ENCODE measurements at regions of chr7 and their contacts with region 1.

Region 1: DNA sequence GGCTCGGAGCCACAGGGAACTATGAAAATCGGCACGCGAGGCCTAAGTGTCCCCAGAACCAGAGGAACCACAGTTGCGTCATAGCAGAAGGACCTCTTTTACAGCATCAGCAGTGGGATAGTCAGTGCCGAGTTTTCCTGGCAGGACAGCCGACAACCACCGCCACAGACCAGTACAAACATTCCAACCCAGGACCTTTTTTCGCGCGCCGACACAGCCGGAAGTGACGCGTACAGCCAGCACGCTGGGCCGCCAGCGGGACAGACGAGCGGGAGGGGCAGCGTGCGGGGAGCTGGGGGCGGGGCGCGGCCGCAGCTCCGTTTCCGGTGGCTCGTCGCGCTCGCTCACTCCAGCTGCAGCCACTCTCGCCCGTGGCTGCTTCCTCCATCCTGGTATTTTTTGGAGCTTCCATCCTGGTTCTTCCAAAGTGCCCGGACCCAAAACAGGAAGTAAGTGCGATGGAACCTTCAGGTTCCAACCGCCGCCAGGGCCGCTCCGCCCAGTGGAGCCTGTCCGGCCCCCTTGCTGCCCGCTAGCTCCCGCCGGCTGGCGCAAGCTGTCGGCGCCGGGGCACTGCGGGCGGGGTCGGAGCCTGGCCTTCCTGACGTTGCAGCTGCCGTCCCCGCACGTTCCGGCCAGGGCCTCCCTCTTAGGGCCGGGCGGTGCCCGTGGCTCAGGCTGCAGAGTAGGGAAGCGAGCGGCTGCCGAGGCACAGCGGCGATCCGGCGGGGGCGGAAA is at the start of gene DMTF1:
- DNase-seq: peak; percentile 87 to 92
- ATAC-seq: peak; percentile 93 to 95
- H3K4me3 ChIP-seq: peak within 1 kb of the TSS; percentile 75 to 98 (median 86)
- H3K27ac ChIP-seq: peak within 1 kb of the TSS; percentile 92 to 98 (median 98)
- H3K4me1 ChIP-seq: peaks cover 48 to 50% of the 10 kb centered on the region in 2 donors
- H3K27me3 ChIP-seq: no peaks in the 10 kb centered on the region
- CTCF ChIP-seq: peak in 1 of 5 experiments; percentile 13
- POLR2A ChIP-seq: peak; percentile 84 to 88
- total RNA-seq, gene DMTF1: 10.6 to 31.9 (median 13.1) TPM

Region 2: DNA sequence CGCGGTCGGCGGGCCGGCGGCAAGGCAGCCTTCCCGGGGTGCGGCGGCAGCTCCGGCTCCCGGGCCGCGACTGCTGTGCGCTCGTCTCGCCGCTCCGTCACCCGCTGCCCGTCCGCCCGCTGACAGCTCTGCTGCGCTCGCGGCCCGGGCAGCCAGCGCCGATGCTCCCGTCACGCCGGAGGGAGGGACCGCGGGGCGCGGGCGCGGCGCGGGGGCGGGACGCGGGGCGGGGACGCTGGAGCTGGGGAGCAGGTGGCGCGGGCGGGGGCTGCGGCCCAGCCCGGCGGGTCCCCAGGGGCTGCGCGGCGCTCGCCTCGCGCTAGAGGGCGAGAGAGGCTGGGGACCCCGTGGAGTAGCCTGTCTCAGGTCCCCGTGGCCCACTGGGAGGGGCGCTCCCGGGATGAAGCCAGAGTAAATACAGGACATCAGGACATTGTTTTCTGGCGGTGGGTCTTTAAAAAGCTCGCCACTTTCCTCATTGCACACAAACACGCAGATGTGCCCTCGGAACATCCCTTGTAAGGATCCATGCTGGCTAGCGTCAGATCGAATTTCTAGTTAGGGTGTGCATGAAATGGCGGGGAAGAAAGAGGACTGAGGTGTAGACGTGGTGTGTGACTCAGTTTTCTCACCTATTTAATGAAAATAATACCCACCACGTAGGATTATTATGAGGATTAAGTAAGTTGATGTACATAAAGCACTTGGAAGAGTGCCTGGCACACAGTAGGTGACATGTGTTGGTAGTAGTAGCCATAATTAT is 92.6 kb before region 1 on chr7 and contains the start of gene ELAPOR2:
- in situ Hi-C with region 1: no loop called
- intact Hi-C with region 1: loop called (anchors 2 kb)
- DNase-seq: peak; percentile 27 to 54
- ATAC-seq: peak; percentile 83 to 89
- H3K4me3 ChIP-seq: peak within 1 kb of the TSS; percentile 44 to 74 (median 65)
- H3K27ac ChIP-seq: peak within 1 kb of the TSS; percentile 58 to 72 (median 64)
- H3K4me1 ChIP-seq: peaks cover 9 to 10% of the 10 kb centered on the region in 2 donors
- H3K27me3 ChIP-seq: peaks cover 0 to 3% (median 0%) of the 10 kb centered on the region in 3 donors
- CTCF ChIP-seq: peak; percentile 26 to 60 (median 50)
- POLR2A ChIP-seq: peak; percentile 51 to 65
- total RNA-seq, gene ELAPOR2: 2.3 to 10.5 (median 3.8) TPM

Region 3: GRCh38 chr7:87110778-87111177 is 41.5 kb before region 1 on chr7:
- in situ Hi-C with region 1: no loop called
- intact Hi-C with region 1: no loop called
- DNase-seq: no peak
- ATAC-seq: no peak
- H3K4me3 ChIP-seq: no peak overlapping the region
- H3K27ac ChIP-seq: no peak overlapping the region
- H3K4me1 ChIP-seq: no peaks in the 10 kb centered on the region
- H3K27me3 ChIP-seq: no peaks in the 10 kb centered on the region
- CTCF ChIP-seq: no peak
- POLR2A ChIP-seq: no peak

Region 4: GRCh38 chr7:87219545-87220025 is 67.3 kb after region 1 on chr7 and contains the start of gene TMEM243:
- in situ Hi-C with region 1: no loop called
- intact Hi-C with region 1: loop called (anchors 5 kb)
- DNase-seq: peak; percentile 43 to 48
- ATAC-seq: peak; percentile 57 to 62
- H3K4me3 ChIP-seq: peak within 1 kb of the TSS; percentile 80 to 89 (median 81)
- H3K27ac ChIP-seq: peak within 1 kb of the TSS; percentile 67 to 78 (median 72)
- H3K4me1 ChIP-seq: peaks cover 10% of the 10 kb centered on the region in 2 donors
- H3K27me3 ChIP-seq: no peaks in the 10 kb centered on the region
- CTCF ChIP-seq: peak in 1 of 5 experiments; percentile 30
- POLR2A ChIP-seq: peak; percentile 21 to 48
- total RNA-seq, gene TMEM243: 2.8 to 6.5 (median 4.1) TPM

Region 5: GRCh38 chr7:87234949-87235348 is 82.7 kb after region 1 on chr7:
- in situ Hi-C with region 1: no loop called
- intact Hi-C with region 1: no loop called
- DNase-seq: no peak
- ATAC-seq: no peak
- H3K4me3 ChIP-seq: no peak overlapping the region
- H3K27ac ChIP-seq: no peak overlapping the region
- H3K4me1 ChIP-seq: peaks cover 4 to 7% of the 10 kb centered on the region in 2 donors
- H3K27me3 ChIP-seq: no peaks in the 10 kb centered on the region
- CTCF ChIP-seq: no peak
- POLR2A ChIP-seq: no peak

Region 6: DNA sequence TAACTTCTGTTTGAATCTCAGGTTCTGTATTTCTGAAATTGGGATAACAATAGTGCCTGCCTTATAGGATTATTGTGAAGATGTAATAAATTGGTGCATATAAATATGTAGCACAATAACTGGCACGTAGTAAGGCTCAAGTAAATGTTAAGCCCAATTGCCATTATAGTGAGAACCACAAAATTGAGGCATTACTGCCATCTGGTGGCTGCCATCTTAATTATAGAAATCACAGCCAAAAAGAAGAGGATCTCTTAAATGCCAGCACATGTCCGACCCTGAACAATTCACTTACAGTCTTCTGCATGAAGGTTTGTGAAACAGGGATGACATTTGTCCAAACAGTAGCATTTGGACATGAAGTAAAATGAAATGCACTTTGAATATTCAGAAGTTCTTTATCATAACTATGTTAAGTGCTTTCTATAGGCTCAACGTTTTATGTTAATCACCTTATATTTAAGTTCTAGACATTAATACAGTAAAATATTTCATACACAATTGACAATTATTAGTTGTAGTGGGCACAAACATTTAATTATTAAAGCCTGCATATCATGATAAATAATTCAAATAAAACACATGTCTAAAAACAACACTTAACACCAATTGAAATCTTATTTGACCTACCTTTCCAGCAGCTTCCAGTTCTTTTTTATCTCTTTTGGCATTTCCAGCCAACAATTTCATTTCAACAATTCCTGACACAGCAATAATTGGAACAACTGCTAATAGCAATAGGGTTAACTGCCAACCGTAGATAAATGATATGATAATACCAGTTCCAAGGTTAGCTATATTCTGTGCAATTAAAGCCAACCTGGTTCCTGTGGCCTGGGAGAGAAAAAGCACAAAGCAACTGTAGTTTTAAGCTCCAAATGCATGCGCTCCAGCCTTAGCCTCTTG is 264.7 kb after region 1 on chr7:
- in situ Hi-C with region 1: no loop called
- intact Hi-C with region 1: loop called (anchors 10 kb)
- DNase-seq: peak; percentile 18 to 32
- ATAC-seq: peak; percentile 45 to 53
- H3K4me3 ChIP-seq: no peak overlapping the region
- H3K27ac ChIP-seq: no peak overlapping the region
- H3K4me1 ChIP-seq: peaks cover 13 to 14% of the 10 kb centered on the region in 2 donors
- H3K27me3 ChIP-seq: no peaks in the 10 kb centered on the region
- CTCF ChIP-seq: peak; percentile 60 to 69 (median 64)
- POLR2A ChIP-seq: no peak